CD4-positive, alpha-beta T cell (primary cell): ENCODE measurements at regions of chr21 and their contacts with region 1.

Region 1: DNA sequence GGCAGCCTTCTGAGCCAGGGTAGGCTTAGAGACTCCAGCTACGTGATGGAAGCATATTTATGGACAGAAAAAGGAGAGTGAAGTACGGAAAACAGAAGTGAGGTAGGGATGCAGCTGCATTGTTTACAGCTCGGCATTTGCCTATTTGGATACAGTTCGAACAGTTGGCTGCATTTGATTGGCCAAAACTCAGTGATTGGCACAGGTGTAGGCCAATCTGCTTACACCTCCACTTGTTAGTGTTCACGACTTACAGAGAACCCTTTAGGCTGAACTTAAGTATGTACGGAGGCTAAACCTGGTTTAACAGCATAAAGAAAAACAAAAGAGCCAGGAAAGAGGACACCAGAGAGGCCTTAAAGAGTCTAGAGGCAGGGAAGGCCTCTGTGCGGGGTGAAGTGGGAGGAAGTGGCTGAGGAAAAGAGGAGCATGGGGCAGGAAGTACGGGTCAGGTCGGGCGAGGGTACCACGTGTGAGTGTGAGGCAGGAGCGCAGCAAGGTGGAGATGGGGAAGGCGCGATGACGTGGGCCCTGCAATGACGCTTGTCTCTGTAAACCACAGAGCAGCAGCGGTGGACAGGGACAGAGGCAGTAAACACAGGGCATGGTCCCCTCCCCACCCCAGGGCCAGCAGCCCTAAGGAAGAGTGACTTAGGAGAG is 32.0 kb downstream of the RSPH1 start:
- DNase-seq: peak; percentile 43 to 90 (median 58)
- ATAC-seq: peak; percentile 71
- H3K4me3 ChIP-seq: no peak overlapping the region
- H3K4me3 Mint-ChIP-seq: peak overlapping the region; percentile 66
- H3K27ac ChIP-seq: peak overlapping the region in 1 of 2 donors; percentile 32
- H3K27ac Mint-ChIP-seq: peak overlapping the region; percentile 80
- H3K4me1 ChIP-seq: peaks cover 52% of the 10 kb centered on the region
- H3K4me1 Mint-ChIP-seq: peaks cover 77% of the 10 kb centered on the region
- H3K27me3 ChIP-seq: no peaks in the 10 kb centered on the region
- H3K27me3 Mint-ChIP-seq: no peaks in the 10 kb centered on the region
- CTCF ChIP-seq: no peak

Region 2: DNA sequence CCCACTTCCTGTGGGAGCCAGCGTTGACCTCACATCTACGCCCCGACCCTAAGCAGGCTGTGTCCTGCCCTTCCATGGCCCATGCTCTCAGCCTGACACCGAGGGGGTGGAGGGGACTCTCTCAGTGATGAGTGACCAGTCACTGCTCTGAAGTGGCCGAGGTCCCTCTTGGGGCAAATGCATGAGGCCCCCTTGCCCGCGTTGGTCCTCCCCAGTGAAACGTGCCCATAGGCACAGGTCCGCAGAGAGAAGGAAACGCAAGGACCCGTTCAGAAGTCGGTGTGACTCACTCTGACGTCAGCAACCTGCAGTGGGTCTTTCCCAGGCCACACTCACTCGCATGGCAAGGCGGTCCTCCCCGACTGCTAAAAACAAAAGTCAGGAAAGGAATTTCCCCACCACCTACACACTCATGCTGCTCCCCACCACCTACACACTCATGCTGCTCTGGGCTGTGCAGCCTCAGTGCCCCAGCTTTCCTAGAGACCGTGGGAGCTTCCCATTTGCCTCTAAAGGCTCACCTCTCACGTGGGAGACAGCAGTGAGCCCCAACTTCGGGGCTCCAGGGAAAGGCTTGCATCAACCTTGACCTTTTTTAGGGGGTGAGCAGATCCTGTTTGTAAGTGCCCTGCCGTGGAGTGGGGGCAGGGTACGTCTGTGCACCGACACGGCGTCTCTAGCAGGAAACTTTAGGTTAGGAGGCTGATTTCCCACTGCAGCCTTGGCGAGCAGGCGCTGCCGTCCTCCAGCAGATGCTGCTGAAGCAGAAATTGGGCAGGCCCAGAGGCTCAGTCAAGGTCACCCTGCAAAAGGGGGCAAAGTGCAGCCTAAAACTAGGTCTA is 48.8 kb before region 1 on chr21:
- CTCF ChIA-PET with region 1: no interaction called
- POLR2A ChIA-PET with region 1: no interaction called
- intact Hi-C with region 1: loop called in 1 of 2 experiments (anchors 5 kb)
- DNase-seq: peak; percentile 69 to 98 (median 85)
- ATAC-seq: peak; percentile 89
- H3K4me3 ChIP-seq: peak overlapping the region; percentile 17
- H3K4me3 Mint-ChIP-seq: peak overlapping the region; percentile 82
- H3K27ac ChIP-seq: peak overlapping the region; percentile 90 to 95
- H3K27ac Mint-ChIP-seq: no peak overlapping the region
- H3K4me1 ChIP-seq: peaks cover 73% of the 10 kb centered on the region
- H3K4me1 Mint-ChIP-seq: peaks cover 63% of the 10 kb centered on the region
- H3K27me3 ChIP-seq: no peaks in the 10 kb centered on the region
- H3K27me3 Mint-ChIP-seq: no peaks in the 10 kb centered on the region
- CTCF ChIP-seq: no peak

Region 3: GRCh38 chr21:42489981-42490380 is 26.0 kb after region 1 on chr21:
- CTCF ChIA-PET with region 1: no interaction called
- POLR2A ChIA-PET with region 1: no interaction called
- intact Hi-C with region 1: loop called in 1 of 2 experiments (anchors 1 kb)
- DNase-seq: no peak
- ATAC-seq: no peak
- H3K4me3 ChIP-seq: no peak overlapping the region
- H3K4me3 Mint-ChIP-seq: no peak overlapping the region
- H3K27ac ChIP-seq: no peak overlapping the region
- H3K27ac Mint-ChIP-seq: no peak overlapping the region
- H3K4me1 ChIP-seq: peaks cover 3% of the 10 kb centered on the region
- H3K4me1 Mint-ChIP-seq: peaks cover 6% of the 10 kb centered on the region
- H3K27me3 ChIP-seq: no peaks in the 10 kb centered on the region
- H3K27me3 Mint-ChIP-seq: peaks cover 13% of the 10 kb centered on the region
- CTCF ChIP-seq: no peak

Region 4: GRCh38 chr21:42513985-42514882 is 50.2 kb after region 1 on chr21:
- CTCF ChIA-PET with region 1: no interaction called
- POLR2A ChIA-PET with region 1: interaction called, 3 read pairs
- intact Hi-C with region 1: loop called in 1 of 2 experiments (anchors 1 kb)
- DNase-seq: peak; percentile 36 to 81 (median 53)
- ATAC-seq: peak; percentile 84
- H3K4me3 ChIP-seq: peak overlapping the region; percentile 82
- H3K4me3 Mint-ChIP-seq: peak overlapping the region; percentile 88
- H3K27ac ChIP-seq: peak overlapping the region; percentile 48 to 65
- H3K27ac Mint-ChIP-seq: peak overlapping the region; percentile 76
- H3K4me1 ChIP-seq: peaks cover 28% of the 10 kb centered on the region
- H3K4me1 Mint-ChIP-seq: peaks cover 31% of the 10 kb centered on the region
- H3K27me3 ChIP-seq: no peaks in the 10 kb centered on the region
- H3K27me3 Mint-ChIP-seq: no peaks in the 10 kb centered on the region
- CTCF ChIP-seq: no peak

Region 5: DNA sequence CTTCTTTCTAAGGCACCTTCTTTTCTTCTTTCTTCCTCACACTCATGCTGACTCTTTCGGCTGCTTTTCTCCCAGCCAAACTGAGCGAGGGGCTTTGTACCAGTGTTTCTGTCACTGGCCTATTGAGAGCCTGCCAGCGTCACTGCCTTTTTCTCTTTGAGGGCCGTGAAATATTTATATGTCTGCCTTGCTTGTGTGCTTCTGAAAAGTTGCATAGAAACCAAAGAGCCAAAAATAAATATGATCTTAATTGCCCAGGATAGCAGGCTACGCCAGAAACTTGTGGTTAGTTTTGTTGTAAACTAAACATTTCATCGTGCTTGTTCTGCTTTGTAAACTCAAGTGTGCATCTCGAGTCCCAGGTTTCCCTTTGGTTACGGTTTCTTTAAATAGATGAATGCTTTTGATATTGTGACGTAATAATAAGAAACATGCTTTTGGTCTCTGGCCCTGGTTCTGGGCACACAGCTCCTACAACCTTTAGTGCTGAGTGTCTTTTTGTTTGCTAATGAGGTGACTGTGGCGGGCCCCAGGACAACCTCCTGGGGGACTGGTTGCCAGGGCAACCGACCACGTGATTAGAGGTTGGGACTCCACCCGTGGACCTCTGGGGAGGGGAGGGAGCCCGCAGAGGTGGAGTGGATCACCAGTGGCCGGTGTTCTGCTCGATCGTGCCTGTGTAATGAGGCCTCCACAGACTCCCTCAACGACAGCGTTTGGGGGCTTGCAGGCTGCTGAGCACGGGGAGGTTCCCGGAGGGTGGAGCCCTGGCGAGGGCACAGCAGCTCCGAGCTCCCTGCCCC is 60.6 kb after region 1 on chr21:
- CTCF ChIA-PET with region 1: no interaction called
- POLR2A ChIA-PET with region 1: no interaction called
- intact Hi-C with region 1: loop called in 1 of 2 experiments (anchors 5 kb)
- DNase-seq: peak in 6 of 14 experiments; percentile 16 to 63 (median 38)
- ATAC-seq: no peak
- H3K4me3 ChIP-seq: no peak overlapping the region
- H3K4me3 Mint-ChIP-seq: no peak overlapping the region
- H3K27ac ChIP-seq: no peak overlapping the region
- H3K27ac Mint-ChIP-seq: peak overlapping the region; percentile 65
- H3K4me1 ChIP-seq: peaks cover 37% of the 10 kb centered on the region
- H3K4me1 Mint-ChIP-seq: peaks cover 59% of the 10 kb centered on the region
- H3K27me3 ChIP-seq: no peaks in the 10 kb centered on the region
- H3K27me3 Mint-ChIP-seq: no peaks in the 10 kb centered on the region
- CTCF ChIP-seq: no peak